Caco-2 (cell line): ENCODE measurements at regions of chr17 and their contacts with region 1.

Region 1: GRCh38 chr17:48791128-48792032 is 25.6 kb downstream of the TTLL6 start:
- DNase-seq: peak; percentile 97
- H3K4me3 ChIP-seq: no peak overlapping the region
- H3K4me3 Mint-ChIP-seq: no peak overlapping the region
- H3K27ac Mint-ChIP-seq: peak overlapping the region; percentile 51
- H3K4me1 ChIP-seq: peaks cover 50% of the 10 kb centered on the region
- H3K4me1 Mint-ChIP-seq: peaks cover 52% of the 10 kb centered on the region
- H3K27me3 ChIP-seq: no peaks in the 10 kb centered on the region
- H3K27me3 Mint-ChIP-seq: no peaks in the 10 kb centered on the region
- CTCF ChIP-seq: peak; percentile 98 to 100

Region 2: GRCh38 chr17:48671697-48672171 is 119.6 kb before region 1 on chr17:
- CTCF ChIA-PET with region 1: interaction called, 71 read pairs
- POLR2A ChIA-PET with region 1: no interaction called
- intact Hi-C with region 1: loop called (anchors 1 kb)
- DNase-seq: peak; percentile 86 to 94
- H3K4me3 ChIP-seq: peak overlapping the region; percentile 23
- H3K4me3 Mint-ChIP-seq: peak overlapping the region; percentile 58
- H3K27ac Mint-ChIP-seq: peak overlapping the region; percentile 11
- H3K4me1 ChIP-seq: no peaks in the 10 kb centered on the region
- H3K4me1 Mint-ChIP-seq: peaks cover 5% of the 10 kb centered on the region
- H3K27me3 ChIP-seq: no peaks in the 10 kb centered on the region
- H3K27me3 Mint-ChIP-seq: peaks cover 2% of the 10 kb centered on the region
- CTCF ChIP-seq: peak; percentile 99

Region 3: GRCh38 chr17:48724251-48725003 is 67.0 kb before region 1 on chr17:
- CTCF ChIA-PET with region 1: interaction called, 163 read pairs
- POLR2A ChIA-PET with region 1: interaction called, 8 read pairs
- intact Hi-C with region 1: loop called (anchors 1 kb)
- DNase-seq: peak; percentile 91 to 94
- H3K4me3 ChIP-seq: no peak overlapping the region
- H3K4me3 Mint-ChIP-seq: no peak overlapping the region
- H3K27ac Mint-ChIP-seq: no peak overlapping the region
- H3K4me1 ChIP-seq: peaks cover 26% of the 10 kb centered on the region
- H3K4me1 Mint-ChIP-seq: peaks cover 2% of the 10 kb centered on the region
- H3K27me3 ChIP-seq: no peaks in the 10 kb centered on the region
- H3K27me3 Mint-ChIP-seq: no peaks in the 10 kb centered on the region
- CTCF ChIP-seq: peak; percentile 97 to 98

Region 4: DNA sequence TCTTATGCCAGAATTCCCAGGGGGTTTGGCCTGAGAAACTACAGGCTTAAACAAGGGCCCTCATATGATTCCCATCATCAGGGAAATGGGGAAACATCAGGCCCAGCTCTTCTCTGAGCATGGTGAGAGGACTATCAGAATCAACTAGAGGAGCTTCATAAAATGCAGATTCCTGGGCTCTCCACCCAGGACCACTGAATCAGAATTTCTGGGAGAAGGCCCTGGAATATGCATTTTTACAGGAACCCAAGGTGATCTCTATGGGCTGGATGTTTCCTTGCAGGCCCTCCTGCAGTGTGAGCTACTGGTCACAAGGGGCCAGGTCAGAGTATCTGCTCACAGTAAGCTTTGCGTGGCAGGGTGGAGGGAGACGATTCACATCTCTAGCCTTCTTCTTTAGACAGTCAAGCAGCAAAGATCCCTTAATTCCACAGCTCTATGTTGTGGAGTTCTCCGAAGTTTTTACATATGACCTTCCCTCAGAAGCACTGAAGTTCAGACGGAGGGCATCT is 24.1 kb before region 1 on chr17:
- CTCF ChIA-PET with region 1: interaction called, 21 read pairs
- POLR2A ChIA-PET with region 1: interaction called, 5 read pairs
- intact Hi-C with region 1: no loop called
- DNase-seq: peak in 1 of 2 experiments; percentile 34
- H3K4me3 ChIP-seq: no peak overlapping the region
- H3K4me3 Mint-ChIP-seq: no peak overlapping the region
- H3K27ac Mint-ChIP-seq: no peak overlapping the region
- H3K4me1 ChIP-seq: no peaks in the 10 kb centered on the region
- H3K4me1 Mint-ChIP-seq: no peaks in the 10 kb centered on the region
- H3K27me3 ChIP-seq: no peaks in the 10 kb centered on the region
- H3K27me3 Mint-ChIP-seq: peaks cover 19% of the 10 kb centered on the region
- CTCF ChIP-seq: peak; percentile 50 to 63

Region 5: DNA sequence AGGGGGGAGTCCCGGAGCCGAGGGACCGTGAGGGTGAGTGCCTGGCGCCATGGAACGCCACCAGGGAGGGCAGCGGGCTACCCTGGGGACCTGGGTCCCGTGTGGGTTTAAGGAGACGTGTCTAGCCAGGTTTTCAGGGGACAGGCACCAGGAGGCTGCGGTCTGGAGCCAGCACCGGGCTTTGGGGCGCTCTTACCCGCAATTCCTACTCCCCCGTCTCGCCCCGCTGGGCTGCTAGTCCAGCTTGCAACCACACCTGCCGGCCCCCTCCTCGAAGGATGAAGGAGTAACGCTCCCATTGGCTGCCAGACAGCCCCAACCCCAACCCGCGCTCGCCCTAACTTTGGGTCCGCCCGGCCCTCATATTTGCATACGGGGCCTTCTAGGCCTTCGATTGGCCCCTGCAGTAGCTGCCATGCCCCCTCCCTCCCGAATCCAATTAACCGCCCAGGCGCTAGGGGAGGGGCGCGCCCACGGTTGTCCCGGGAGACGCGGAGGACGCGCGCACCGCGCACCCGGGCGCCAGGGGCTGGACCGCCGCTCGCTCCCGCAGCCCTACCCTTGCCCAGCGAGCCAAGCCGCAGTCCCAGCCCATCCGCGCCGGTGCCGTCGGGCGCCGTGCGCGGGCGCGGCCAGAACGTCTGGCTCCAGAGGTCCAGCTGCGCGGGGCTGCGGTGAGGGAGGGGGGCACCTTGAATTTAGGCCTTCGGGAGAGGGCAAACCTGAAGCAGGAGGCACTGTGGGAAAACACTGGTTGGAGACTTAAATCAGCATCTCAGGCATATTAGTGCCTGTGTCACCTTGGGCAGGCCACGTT is 25.6 kb after region 1 on chr17 and contains the start of gene TTLL6:
- CTCF ChIA-PET with region 1: interaction called, 8 read pairs
- POLR2A ChIA-PET with region 1: no interaction called
- intact Hi-C with region 1: loop called (anchors 1 kb)
- DNase-seq: peak; percentile 99 to 100
- H3K4me3 ChIP-seq: peak within 1 kb of the TSS; percentile 54
- H3K4me3 Mint-ChIP-seq: peak within 1 kb of the TSS; percentile 75
- H3K27ac Mint-ChIP-seq: no peak within 1 kb of the TSS
- H3K4me1 ChIP-seq: peaks cover 10% of the 10 kb centered on the region
- H3K4me1 Mint-ChIP-seq: peaks cover 8% of the 10 kb centered on the region
- H3K27me3 ChIP-seq: no peaks in the 10 kb centered on the region
- H3K27me3 Mint-ChIP-seq: peaks cover 2% of the 10 kb centered on the region
- CTCF ChIP-seq: peak in 1 of 2 experiments; percentile 17
- total RNA-seq, gene TTLL6: 0.16 and 0.81 TPM in 2 replicates

Region 6: GRCh38 chr17:48985436-48986245 is 194.3 kb after region 1 on chr17:
- CTCF ChIA-PET with region 1: no interaction called
- POLR2A ChIA-PET with region 1: no interaction called
- intact Hi-C with region 1: no loop called
- DNase-seq: peak in 1 of 2 experiments; percentile 29
- H3K4me3 ChIP-seq: no peak overlapping the region
- H3K4me3 Mint-ChIP-seq: no peak overlapping the region
- H3K27ac Mint-ChIP-seq: no peak overlapping the region
- H3K4me1 ChIP-seq: no peaks in the 10 kb centered on the region
- H3K4me1 Mint-ChIP-seq: peaks cover 1% of the 10 kb centered on the region
- H3K27me3 ChIP-seq: no peaks in the 10 kb centered on the region
- H3K27me3 Mint-ChIP-seq: no peaks in the 10 kb centered on the region
- CTCF ChIP-seq: no peak